Heart right ventricle (tissue), 16 donors: ENCODE measurements at regions of chr12 and their contacts with region 1.

Region 1: DNA sequence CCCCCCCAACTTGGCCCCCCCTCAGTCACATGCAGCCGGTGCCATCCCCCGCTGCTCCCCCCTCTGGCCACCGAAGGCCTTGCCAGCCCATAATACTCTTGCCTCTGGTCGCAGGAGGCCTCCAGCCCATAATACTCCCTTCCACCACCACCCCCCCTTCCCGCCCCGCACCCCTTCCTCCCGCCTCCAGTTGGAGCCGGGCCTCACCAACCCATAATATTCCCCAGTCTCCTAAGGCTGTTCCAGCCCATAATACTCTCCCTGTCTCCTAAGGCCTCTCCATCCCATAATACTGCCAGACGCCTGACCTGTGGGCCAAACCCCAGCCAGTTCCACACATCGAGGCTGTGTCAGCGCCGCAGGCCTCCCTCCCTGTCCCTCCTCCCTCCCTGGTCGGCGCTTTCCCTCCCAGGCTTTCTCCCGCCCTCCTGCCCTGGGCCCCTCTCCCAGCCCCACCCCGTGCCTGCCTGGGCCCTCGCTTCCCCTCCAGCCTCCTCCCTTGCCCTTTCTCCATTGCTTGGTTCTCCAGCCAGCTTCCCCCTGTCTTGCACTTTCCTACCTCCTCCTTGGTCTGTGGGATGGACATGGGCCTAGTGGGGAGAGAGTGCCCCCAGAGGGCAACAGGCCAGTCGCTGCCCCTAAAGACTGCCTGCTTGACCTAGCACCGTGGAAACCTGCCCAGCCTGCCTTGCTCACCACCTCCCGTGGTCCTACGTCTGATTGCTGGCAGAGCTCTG is 6.8 kb upstream of the CHD4 start:
- DNase-seq: peak; percentile 89 to 94
- ATAC-seq: peak; percentile 83 to 88 (median 88)
- H3K4me3 ChIP-seq: peak overlapping the region in 1 of 10 donors; percentile 38
- H3K27ac ChIP-seq: peak overlapping the region; percentile 50 to 96 (median 94)
- H3K4me1 ChIP-seq: peaks cover 16 to 42% (median 26%) of the 10 kb centered on the region in 9 donors
- H3K27me3 ChIP-seq: no peaks in the 10 kb centered on the region
- CTCF ChIP-seq: peak in 2 of 9 donors; percentile 6 to 21

Region 2: DNA sequence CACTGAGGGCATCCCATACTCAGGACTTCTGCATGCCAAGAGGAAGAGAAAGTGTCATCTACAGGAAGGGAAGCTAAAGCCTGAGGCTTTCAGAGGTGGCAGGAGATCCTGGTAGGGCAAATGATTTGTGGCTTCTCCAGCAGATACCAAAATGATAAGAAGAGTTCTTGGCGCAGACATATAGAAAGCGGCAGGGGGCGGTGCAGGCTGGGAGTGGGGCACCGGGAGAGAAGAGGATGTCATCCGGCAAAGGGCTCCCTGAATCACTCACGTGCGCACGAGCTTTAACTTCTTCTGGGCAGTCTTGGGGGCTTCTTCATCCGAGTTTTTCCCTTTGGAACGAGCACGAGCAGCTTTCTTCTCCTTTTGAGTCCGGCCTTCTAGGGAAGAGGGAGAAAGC is 38.4 kb after region 1 on chr12:
- intact Hi-C with region 1: loop called in 2 of 10 experiments (anchors 5 kb)
- DNase-seq: no peak
- ATAC-seq: no peak
- H3K4me3 ChIP-seq: no peak overlapping the region
- H3K27ac ChIP-seq: no peak overlapping the region
- H3K4me1 ChIP-seq: peaks cover 0 to 22% (median 10%) of the 10 kb centered on the region in 9 donors
- H3K27me3 ChIP-seq: no peaks in the 10 kb centered on the region
- CTCF ChIP-seq: no peak

Region 3: GRCh38 chr12:6688999-6689882 is 75.3 kb after region 1 on chr12 and contains the start of gene ZNF384:
- intact Hi-C with region 1: loop called in 8 of 10 experiments (anchors 2 to 10 kb)
- DNase-seq: peak; percentile 94 to 99
- ATAC-seq: peak; percentile 91 to 97 (median 96)
- H3K4me3 ChIP-seq: peak within 1 kb of the TSS; percentile 65 to 98 (median 91)
- H3K27ac ChIP-seq: peak within 1 kb of the TSS; percentile 95 to 100 (median 98)
- H3K4me1 ChIP-seq: peaks cover 3 to 55% (median 40%) of the 10 kb centered on the region in 9 donors
- H3K27me3 ChIP-seq: peaks cover 0 to 1% (median 0%) of the 10 kb centered on the region in 7 donors
- CTCF ChIP-seq: peak in 5 of 9 donors; percentile 11 to 31 (median 22)
- total RNA-seq, gene ZNF384: 25.1 to 36.0 (median 29.0) TPM

Region 4: DNA sequence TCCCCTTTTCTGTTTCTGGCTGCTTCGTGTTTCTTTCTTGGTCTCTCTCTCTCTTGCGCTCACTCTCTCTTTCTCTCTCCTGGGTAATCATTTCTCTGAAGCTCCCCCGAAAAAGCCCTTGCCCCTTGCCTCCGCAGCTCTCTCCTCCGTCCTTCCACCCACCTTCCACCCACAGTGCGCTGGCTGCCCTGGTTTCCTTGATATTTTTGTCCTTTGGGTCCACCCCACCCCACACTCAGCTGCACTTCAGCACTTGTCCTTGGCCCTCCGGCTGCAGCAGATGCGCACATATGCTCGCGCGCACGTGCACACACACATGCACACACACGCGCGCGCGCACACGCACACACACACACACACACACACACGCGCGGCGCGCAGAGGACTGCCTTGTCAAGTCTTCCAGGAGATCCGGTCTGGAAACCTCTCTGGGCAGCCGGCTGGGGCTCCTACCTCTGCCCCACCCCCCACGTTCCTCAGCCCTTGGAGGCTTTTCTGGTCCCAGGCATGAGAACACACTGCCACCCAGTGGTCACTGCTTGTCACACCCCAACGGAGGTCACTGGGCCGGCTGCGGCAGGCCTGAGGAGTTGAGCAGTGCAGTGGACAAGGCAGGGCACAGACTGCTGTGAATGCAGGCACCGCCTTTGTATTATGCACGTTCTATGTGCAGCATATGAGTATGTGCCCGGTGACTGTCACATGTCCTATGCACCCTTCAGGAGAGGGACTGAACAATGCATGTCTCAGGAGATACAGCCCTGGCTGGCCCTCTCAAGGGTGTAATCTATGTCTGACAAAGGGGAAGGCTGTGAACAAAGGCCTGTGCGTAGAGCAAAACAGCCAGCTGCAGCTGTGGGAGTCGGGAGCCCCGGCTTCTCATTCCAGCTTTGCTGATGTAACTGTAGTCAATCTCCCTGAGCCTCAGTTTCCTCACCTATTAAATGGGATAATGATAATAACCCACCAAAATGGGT is 164.9 kb after region 1 on chr12:
- intact Hi-C with region 1: loop called in 4 of 10 experiments (anchors 5 kb)
- DNase-seq: peak; percentile 92 to 97
- ATAC-seq: peak; percentile 94 to 97 (median 96)
- H3K4me3 ChIP-seq: peak overlapping the region in 9 of 10 donors; percentile 35 to 60 (median 43)
- H3K27ac ChIP-seq: peak overlapping the region in 9 of 10 donors; percentile 49 to 73 (median 62)
- H3K4me1 ChIP-seq: peaks cover 0 to 30% (median 15%) of the 10 kb centered on the region in 9 donors
- H3K27me3 ChIP-seq: peaks cover 0 to 40% (median 4%) of the 10 kb centered on the region in 7 donors
- CTCF ChIP-seq: peak in 8 of 9 donors; percentile 92 to 97 (median 96)